Activated naive CD4-positive, alpha-beta T cell treated with anti-CD3 and anti-CD28 coated beads for 36 hours (primary cell): ENCODE measurements at regions of chr14 and their contacts with region 1.

Region 1: GRCh38 chr14:60220084-60220483 is 28.9 kb upstream of the PPM1A start:
- DNase-seq: peak; percentile 27
- H3K4me3 Mint-ChIP-seq: no peak overlapping the region
- H3K27ac Mint-ChIP-seq: no peak overlapping the region
- H3K4me1 Mint-ChIP-seq: peaks cover 15% of the 10 kb centered on the region
- H3K27me3 Mint-ChIP-seq: no peaks in the 10 kb centered on the region

Region 2: DNA sequence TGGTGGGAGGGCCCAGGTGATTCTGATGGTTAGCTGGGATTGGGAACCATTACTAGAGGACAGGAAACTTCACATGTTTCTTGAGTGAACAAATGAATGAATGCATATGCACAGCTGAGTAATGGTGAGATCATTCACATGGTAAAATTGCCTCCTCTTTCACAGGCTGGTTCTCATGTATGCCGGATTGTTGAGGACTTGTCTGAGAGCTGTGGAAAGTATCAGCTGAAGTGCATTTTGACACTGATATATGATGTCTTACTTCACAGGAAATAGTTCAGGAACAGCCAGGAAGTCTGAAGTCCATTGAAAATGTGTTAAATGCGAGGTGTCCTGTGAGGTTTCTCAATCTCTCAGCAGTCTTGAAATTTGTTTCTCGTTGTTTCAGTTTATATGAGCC is 1659.9 kb before region 1 on chr14:
- CTCF ChIA-PET with region 1: no interaction called
- intact Hi-C with region 1: no loop called
- DNase-seq: no peak
- H3K4me3 Mint-ChIP-seq: no peak overlapping the region
- H3K27ac Mint-ChIP-seq: peak overlapping the region; percentile 44
- H3K4me1 Mint-ChIP-seq: peaks cover 14% of the 10 kb centered on the region
- H3K27me3 Mint-ChIP-seq: no peaks in the 10 kb centered on the region

Region 3: DNA sequence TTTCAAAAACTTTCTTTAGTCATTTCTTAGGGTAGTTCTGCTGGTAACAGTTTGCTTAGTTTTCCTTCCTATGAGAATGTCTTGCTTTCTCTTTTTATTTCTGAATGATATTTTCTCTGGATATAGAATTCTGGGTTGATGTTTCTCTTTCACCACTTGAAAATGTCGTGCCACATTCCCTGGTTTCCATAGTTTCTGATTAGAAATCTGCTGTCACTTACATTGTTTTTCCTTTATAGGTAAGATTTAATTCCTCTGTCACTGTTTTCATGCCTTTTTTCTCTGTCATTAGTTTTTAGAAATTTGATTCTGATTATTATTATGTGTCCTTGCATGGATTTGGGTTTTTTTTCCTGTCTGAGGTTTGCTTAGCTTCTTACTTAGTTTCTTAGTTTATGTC is 205.7 kb before region 1 on chr14:
- CTCF ChIA-PET with region 1: no interaction called
- intact Hi-C with region 1: no loop called
- DNase-seq: no peak
- H3K4me3 Mint-ChIP-seq: no peak overlapping the region
- H3K27ac Mint-ChIP-seq: no peak overlapping the region
- H3K4me1 Mint-ChIP-seq: no peaks in the 10 kb centered on the region
- H3K27me3 Mint-ChIP-seq: peaks cover 6% of the 10 kb centered on the region

Region 4: DNA sequence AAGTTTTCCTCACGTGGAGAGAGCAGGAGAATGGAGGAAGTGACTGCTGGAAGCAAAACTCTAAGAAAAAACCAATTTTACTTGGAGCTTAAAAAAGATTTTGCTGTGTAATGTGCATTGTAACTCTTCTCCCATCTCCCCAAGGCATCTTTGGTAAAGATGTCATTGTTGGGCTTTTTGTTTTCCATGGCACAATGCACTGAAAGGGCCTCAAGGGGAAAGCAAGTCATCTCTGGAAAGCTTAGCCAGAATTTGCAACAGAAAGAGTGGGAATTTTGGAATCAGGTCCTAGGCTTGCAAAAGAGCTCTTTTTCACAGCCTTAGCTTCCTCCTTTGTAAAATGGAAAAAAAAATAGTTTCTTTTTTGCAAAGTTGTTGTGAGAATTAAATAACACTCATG is 21.0 kb after region 1 on chr14:
- CTCF ChIA-PET with region 1: no interaction called
- intact Hi-C with region 1: loop called (anchors 2 kb)
- DNase-seq: no peak
- H3K4me3 Mint-ChIP-seq: no peak overlapping the region
- H3K27ac Mint-ChIP-seq: no peak overlapping the region
- H3K4me1 Mint-ChIP-seq: peaks cover 10% of the 10 kb centered on the region
- H3K27me3 Mint-ChIP-seq: no peaks in the 10 kb centered on the region